Colonic mucosa (tissue), 4 donors: ENCODE measurements at regions of chr18 and their contacts with region 1.

Region 1: DNA sequence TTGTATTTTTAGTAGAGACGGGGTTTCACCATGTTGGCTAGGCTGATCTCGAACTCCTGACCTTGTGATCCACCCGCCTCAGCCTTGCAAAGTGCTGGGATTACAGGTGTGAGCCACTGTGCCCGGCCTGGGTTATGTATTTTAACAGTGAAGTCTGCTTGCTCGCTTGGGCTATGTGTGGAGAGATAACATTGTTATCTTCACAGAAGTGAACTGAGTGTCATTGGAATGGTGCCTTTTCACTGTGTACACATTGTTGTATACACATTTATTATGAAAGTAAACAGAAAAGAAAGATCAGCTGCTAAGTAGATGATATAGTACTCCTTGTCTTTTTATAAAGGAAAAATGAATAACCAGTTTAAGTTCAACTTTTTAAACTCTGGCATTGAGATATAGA is 30.4 kb downstream of the RNF138 start:
- DNase-seq: no peak
- H3K4me3 ChIP-seq: no peak overlapping the region
- H3K27ac ChIP-seq: no peak overlapping the region
- H3K4me1 ChIP-seq: no peaks in the 10 kb centered on the region
- H3K27me3 ChIP-seq: no peaks in the 10 kb centered on the region
- CTCF ChIP-seq: no peak

Region 2: GRCh38 chr18:31857526-31858106 is 264.4 kb before region 1 on chr18:
- intact Hi-C with region 1: loop called (anchors 10 kb)
- DNase-seq: no peak
- H3K4me3 ChIP-seq: no peak overlapping the region
- H3K27ac ChIP-seq: no peak overlapping the region
- H3K4me1 ChIP-seq: no peaks in the 10 kb centered on the region
- H3K27me3 ChIP-seq: no peaks in the 10 kb centered on the region
- CTCF ChIP-seq: no peak

Region 3: DNA sequence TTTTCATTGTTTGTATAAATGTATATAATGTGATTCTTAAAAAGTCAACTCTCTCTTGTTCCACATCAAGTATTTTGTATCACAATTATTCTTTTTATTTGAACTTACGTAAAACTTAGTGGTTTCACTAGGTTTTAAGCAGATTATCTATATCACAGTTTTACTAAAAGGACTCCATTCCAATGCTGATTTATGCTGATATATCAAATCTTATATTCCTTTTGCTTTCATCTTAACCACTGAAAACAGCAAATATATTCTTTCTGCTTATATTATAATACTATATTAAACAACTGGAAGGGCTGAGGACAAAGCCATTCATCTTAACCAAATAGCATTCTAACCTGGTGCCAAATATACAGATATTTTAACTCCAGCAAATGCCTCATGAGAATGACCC is 203.3 kb before region 1 on chr18:
- intact Hi-C with region 1: no loop called
- DNase-seq: no peak
- H3K4me3 ChIP-seq: no peak overlapping the region
- H3K27ac ChIP-seq: no peak overlapping the region
- H3K4me1 ChIP-seq: no peaks in the 10 kb centered on the region
- H3K27me3 ChIP-seq: no peaks in the 10 kb centered on the region
- CTCF ChIP-seq: no peak

Region 4: DNA sequence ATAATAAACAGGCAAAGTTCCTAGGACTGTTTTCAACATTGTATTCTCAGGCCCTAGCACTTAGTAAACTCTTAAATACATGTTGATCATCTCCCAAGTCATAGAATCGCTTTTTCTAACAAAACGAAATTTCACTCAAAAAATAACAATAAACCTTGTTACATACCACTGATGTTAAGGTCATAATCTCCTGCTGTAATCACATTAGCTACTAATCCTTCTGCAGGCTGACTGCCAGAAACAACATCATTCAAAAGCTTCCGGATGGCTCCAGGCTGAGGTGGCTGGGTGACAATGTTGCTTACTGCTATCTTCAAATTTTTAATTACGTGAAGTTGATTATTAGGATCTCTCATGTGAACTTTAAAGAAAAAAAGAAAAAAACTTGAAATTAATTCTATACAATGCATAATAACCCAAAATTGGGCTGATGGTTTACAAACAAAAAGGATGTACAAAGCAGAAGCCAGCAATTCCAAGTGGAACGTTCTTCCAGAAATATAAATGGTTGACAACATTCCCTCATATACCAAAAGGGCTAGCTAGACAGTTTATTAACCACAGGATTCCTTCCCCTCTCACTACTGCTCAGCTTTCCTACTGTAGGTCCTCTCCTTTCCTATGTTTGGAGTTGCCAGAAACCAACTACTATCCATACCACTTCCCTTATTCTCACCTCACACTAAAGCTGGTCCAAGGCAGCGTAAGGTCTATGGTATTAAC is 190.7 kb before region 1 on chr18:
- intact Hi-C with region 1: no loop called
- DNase-seq: no peak
- H3K4me3 ChIP-seq: no peak overlapping the region
- H3K27ac ChIP-seq: no peak overlapping the region
- H3K4me1 ChIP-seq: no peaks in the 10 kb centered on the region
- H3K27me3 ChIP-seq: no peaks in the 10 kb centered on the region
- CTCF ChIP-seq: no peak